ENCODE measurements at regions of chr4 and their contacts with region 1.

Region 1: GRCh38 chr4:54228056-54228527 is 1.0 kb upstream of the PDGFRA start:
- DNase-seq: peak; percentile 83
- ATAC-seq: peak; percentile 65
- H3K4me3 ChIP-seq: peak overlapping the region; percentile 76
- H3K27ac ChIP-seq: no peak overlapping the region
- H3K4me1 ChIP-seq: peaks cover 41% of the 10 kb centered on the region
- H3K27me3 ChIP-seq: peaks cover 40% of the 10 kb centered on the region
- CTCF ChIP-seq: peak; percentile 96

Region 2: DNA sequence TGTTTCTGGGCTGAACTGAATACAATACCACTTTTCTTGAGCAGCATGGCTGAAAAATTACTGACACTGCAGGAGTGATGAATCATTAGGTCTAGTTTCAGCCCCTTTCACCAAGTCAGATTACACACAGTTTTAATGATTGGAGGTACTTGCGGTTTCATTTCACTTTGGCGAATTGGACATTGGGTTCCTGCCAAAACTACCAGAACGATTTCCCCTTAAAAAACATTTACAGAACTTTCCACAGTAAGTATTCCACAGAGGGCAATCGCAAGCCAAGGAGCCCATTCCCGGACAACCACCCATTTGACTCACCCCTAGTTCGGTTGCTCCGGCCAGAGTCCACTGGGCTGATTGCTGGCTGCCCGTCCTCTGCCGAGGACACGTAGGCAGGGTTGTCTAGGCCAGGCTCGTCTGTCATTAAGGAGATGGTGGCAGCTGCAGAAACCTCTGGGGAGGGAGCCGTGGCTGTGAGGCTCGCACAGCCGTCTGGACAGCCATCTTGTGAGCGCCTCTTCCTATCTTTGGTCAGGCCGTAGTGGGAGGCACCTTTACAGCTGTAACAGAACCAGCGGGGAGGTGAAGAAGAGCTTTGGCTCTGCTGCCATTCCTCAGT is 720.3 kb before region 1 on chr4:
- CTCF ChIA-PET with region 1: no interaction called
- POLR2A ChIA-PET with region 1: no interaction called
- intact Hi-C with region 1: loop called (anchors 2 kb)
- DNase-seq: no peak
- ATAC-seq: no peak; the same call in 1 of the 2 replicates
- H3K4me3 ChIP-seq: no peak overlapping the region
- H3K27ac ChIP-seq: no peak overlapping the region
- H3K4me1 ChIP-seq: peaks cover 11% of the 10 kb centered on the region; the same call in 1 of the 2 replicates
- H3K27me3 ChIP-seq: no peaks in the 10 kb centered on the region
- CTCF ChIP-seq: no peak

Region 3: GRCh38 chr4:53653484-53654053 is 574.5 kb before region 1 on chr4:
- CTCF ChIA-PET with region 1: no interaction called
- POLR2A ChIA-PET with region 1: no interaction called
- intact Hi-C with region 1: loop called (anchors 5 kb)
- DNase-seq: no peak
- ATAC-seq: no peak
- H3K4me3 ChIP-seq: no peak overlapping the region
- H3K27ac ChIP-seq: no peak overlapping the region
- H3K4me1 ChIP-seq: peaks cover 15% of the 10 kb centered on the region; the same call in 1 of the 2 replicates
- H3K27me3 ChIP-seq: no peaks in the 10 kb centered on the region
- CTCF ChIP-seq: 0 out of 2 replicates have a peak, but pooled peaks have one; percentile 16

Region 4: DNA sequence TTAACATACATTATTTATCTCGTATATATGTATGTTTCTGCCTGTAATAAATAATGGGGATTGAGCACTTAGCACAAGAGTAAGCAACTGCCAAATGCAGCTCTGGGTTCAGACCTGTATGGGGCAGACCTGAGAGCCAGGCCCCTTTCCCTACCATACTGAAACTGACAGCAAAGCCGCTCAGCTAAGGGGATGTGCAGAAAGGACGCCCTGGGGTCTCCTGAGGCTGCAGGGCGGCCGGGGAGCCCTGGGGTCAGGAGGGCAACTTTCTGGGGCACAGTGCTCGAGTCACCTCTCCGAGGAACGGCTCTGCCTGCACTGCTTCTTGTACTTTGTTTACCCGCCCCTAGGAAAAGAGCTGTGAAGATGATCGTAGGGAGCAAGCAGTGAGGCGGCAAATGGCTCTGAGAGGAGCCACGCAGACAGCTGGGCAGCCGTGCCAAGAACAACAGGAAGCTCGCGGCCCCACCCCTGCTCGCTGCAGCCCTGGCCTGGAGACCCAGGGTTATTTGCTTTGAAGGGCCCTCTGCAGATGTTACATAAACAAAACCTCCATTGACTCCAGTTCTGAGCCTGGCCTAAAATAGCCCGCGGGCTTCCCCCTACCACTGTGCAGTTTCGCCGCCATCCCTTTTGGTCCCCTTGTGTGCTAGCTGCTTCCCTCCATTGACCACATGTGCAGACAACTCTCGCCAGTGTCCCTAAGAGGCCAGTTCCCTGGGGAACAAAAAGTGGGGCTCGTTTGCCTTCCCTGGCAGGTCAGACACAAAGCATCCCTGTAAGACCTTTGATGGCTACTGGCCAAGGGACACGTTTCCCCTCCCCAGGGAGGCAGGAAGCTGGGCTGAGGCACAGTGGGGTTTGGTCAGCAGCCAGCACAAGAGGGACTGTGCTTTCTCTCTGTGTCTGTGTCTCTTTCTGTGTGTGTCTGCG is 525.5 kb before region 1 on chr4:
- CTCF ChIA-PET with region 1: interaction called, 6 read pairs
- POLR2A ChIA-PET with region 1: no interaction called
- intact Hi-C with region 1: loop called (anchors 2 kb)
- DNase-seq: peak; percentile 86
- ATAC-seq: peak; percentile 88
- H3K4me3 ChIP-seq: peak overlapping the region; percentile 63
- H3K27ac ChIP-seq: peak overlapping the region; percentile 88
- H3K4me1 ChIP-seq: peaks cover 34% of the 10 kb centered on the region
- H3K27me3 ChIP-seq: no peaks in the 10 kb centered on the region
- CTCF ChIP-seq: 0 out of 2 replicates have a peak, but pooled peaks have one; percentile 15

Region 5: DNA sequence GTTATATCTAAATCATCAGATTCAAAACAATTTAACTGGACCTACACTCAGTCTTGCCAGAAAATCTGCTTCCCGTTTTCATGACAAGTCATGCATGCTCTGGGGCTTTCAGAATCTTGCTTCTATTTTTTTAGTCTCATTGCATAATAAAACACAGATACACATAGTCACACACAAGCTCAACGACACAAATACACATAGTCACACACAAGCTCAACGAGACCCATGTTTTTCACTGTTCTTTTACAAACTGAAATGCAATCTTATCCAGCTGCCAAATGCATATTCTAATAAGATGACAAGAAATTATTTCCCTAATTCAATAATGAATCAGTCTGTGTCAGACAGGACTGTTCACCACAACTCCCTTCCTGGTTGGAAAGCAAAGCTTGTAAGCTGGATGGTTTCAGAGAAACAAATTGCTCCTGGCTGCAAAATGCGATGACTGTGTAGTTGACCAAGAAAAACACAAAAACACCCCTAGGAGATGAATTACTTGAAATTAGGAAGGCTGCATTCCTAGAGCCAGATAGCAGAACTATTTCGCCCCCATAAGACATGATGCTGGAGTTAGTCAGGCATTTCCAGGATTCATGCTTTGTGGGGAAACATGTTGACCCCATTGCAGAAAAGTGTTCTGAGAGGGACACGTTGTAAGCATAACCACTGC is 372.4 kb before region 1 on chr4:
- CTCF ChIA-PET with region 1: no interaction called
- POLR2A ChIA-PET with region 1: no interaction called
- intact Hi-C with region 1: no loop called
- DNase-seq: peak; percentile 89
- ATAC-seq: peak; percentile 89
- H3K4me3 ChIP-seq: peak overlapping the region; percentile 21
- H3K27ac ChIP-seq: peak overlapping the region; percentile 88
- H3K4me1 ChIP-seq: peaks cover 28% of the 10 kb centered on the region
- H3K27me3 ChIP-seq: no peaks in the 10 kb centered on the region
- CTCF ChIP-seq: no peak

Region 6: GRCh38 chr4:54055494-54055893 is 172.6 kb before region 1 on chr4:
- CTCF ChIA-PET with region 1: no interaction called
- POLR2A ChIA-PET with region 1: interaction called, 11 read pairs
- intact Hi-C with region 1: no loop called
- DNase-seq: no peak
- ATAC-seq: no peak
- H3K4me3 ChIP-seq: no peak overlapping the region
- H3K27ac ChIP-seq: no peak overlapping the region
- H3K4me1 ChIP-seq: peaks cover 15% of the 10 kb centered on the region
- H3K27me3 ChIP-seq: no peaks in the 10 kb centered on the region
- CTCF ChIP-seq: no peak

Region 7: GRCh38 chr4:54165438-54165837 is 62.7 kb before region 1 on chr4:
- CTCF ChIA-PET with region 1: no interaction called
- POLR2A ChIA-PET with region 1: no interaction called
- intact Hi-C with region 1: no loop called
- DNase-seq: peak; percentile 91
- ATAC-seq: peak; percentile 95
- H3K4me3 ChIP-seq: no peak overlapping the region
- H3K27ac ChIP-seq: no peak overlapping the region
- H3K4me1 ChIP-seq: peaks cover 13% of the 10 kb centered on the region; the same call in 1 of the 2 replicates
- H3K27me3 ChIP-seq: no peaks in the 10 kb centered on the region
- CTCF ChIP-seq: peak; percentile 41; the same call in 1 of the 2 replicates